Heart right ventricle (tissue), 16 donors: ENCODE measurements at regions of chr19 and their contacts with region 1.

Region 1: GRCh38 chr19:2983351-2984195 is 6.2 kb downstream of the TLE6 start:
- DNase-seq: peak; percentile 75
- ATAC-seq: peak; percentile 56 to 79 (median 66)
- H3K4me3 ChIP-seq: peak overlapping the region in 9 of 10 donors; percentile 17 to 54 (median 40)
- H3K27ac ChIP-seq: peak overlapping the region; percentile 62 to 89 (median 72)
- H3K4me1 ChIP-seq: peaks cover 14 to 33% (median 24%) of the 10 kb centered on the region in 9 donors
- H3K27me3 ChIP-seq: peaks cover 0 to 18% (median 0%) of the 10 kb centered on the region in 7 donors
- CTCF ChIP-seq: no peak

Region 2: DNA sequence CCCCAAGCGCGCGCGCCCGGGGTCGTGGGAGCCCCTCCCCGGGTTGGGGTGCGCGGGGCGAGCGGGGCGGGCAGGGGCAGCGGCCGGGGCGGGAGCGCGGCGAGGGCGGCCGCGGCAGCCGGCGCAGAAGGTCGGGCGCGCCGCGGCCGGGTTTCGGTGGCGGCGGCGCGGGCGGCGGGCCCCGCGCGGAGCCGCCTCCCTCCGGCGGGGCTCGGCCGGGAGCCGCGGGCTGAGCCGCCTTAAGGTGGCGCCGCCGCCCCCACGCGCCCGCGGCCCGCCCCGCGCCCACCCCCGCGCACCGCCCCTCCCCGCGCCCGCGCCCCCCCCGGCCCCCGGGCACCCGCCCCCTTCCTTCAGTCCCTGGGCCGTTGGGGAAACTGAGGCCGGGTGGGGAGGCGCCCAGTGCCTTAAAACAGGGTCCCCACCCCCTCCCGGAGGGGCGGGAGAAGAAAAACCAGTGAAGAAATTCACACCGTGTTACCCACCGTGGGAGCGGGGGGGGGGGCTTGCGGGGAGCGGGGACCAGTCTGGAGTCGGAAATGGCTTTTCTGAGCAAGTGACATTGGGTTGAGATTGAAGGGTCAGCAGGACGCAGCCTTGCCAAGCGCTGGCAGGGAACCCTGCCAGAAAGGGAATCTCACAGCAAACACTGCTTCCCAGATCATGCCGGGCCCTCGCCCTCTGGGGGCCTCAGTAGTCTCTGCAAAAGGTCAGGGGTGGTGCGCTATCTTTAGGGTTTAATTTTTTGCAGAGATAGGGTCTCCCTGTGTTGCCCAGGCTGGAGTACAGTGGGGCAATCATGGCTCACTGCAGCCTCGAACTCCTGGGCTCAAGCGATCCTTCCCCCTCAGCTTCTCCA is 45.7 kb after region 1 on chr19 and contains the start of gene TLE2:
- intact Hi-C with region 1: loop called in 6 of 10 experiments (anchors 2 to 10 kb)
- DNase-seq: no peak
- ATAC-seq: peak in 5 of 8 donors; percentile 40 to 68 (median 44)
- H3K4me3 ChIP-seq: peak within 1 kb of the TSS; percentile 59 to 80 (median 69)
- H3K27ac ChIP-seq: peak within 1 kb of the TSS in 8 of 10 donors; percentile 30 to 85 (median 66)
- H3K4me1 ChIP-seq: peaks cover 0 to 22% (median 13%) of the 10 kb centered on the region in 9 donors
- H3K27me3 ChIP-seq: peaks cover 0 to 59% (median 0%) of the 10 kb centered on the region in 7 donors
- CTCF ChIP-seq: no peak
- total RNA-seq, gene TLE2: 28.2 to 64.5 (median 39.9) TPM